Heart right ventricle (tissue), 16 donors: ENCODE measurements at regions of chr11 and their contacts with region 1.

Region 1: GRCh38 chr11:10735481-10736475 is 15.3 kb upstream of the CTR9 start:
- DNase-seq: peak; percentile 94 to 96
- ATAC-seq: peak; percentile 99 to 100 (median 100)
- H3K4me3 ChIP-seq: peak overlapping the region in 6 of 10 donors; percentile 19 to 37 (median 30)
- H3K27ac ChIP-seq: peak overlapping the region in 9 of 10 donors; percentile 50 to 76 (median 66)
- H3K4me1 ChIP-seq: peaks cover 0 to 13% (median 4%) of the 10 kb centered on the region in 9 donors
- H3K27me3 ChIP-seq: no peaks in the 10 kb centered on the region
- CTCF ChIP-seq: peak; percentile 98 to 100 (median 99)

Region 2: GRCh38 chr11:9757809-9758636 is 977.8 kb before region 1 on chr11:
- intact Hi-C with region 1: loop called in 1 of 10 experiments (anchors 10 kb)
- DNase-seq: peak; percentile 89 to 92
- ATAC-seq: peak; percentile 52 to 89 (median 75)
- H3K4me3 ChIP-seq: peak overlapping the region; percentile 50 to 86 (median 74)
- H3K27ac ChIP-seq: peak overlapping the region; percentile 57 to 97 (median 94)
- H3K4me1 ChIP-seq: peaks cover 14 to 76% (median 53%) of the 10 kb centered on the region in 9 donors
- H3K27me3 ChIP-seq: no peaks in the 10 kb centered on the region
- CTCF ChIP-seq: peak; percentile 69 to 96 (median 91)

Region 3: GRCh38 chr11:10413268-10413667 is 322.5 kb before region 1 on chr11:
- intact Hi-C with region 1: loop called in 2 of 10 experiments (anchors 5 kb)
- DNase-seq: peak in 1 of 2 donors; percentile 36
- ATAC-seq: peak in 5 of 8 donors; percentile 38 to 61 (median 58)
- H3K4me3 ChIP-seq: no peak overlapping the region
- H3K27ac ChIP-seq: peak overlapping the region in 1 of 10 donors; percentile 77
- H3K4me1 ChIP-seq: peaks cover 0 to 27% (median 4%) of the 10 kb centered on the region in 9 donors
- H3K27me3 ChIP-seq: no peaks in the 10 kb centered on the region
- CTCF ChIP-seq: peak in 6 of 9 donors; percentile 10 to 48 (median 25)

Region 4: DNA sequence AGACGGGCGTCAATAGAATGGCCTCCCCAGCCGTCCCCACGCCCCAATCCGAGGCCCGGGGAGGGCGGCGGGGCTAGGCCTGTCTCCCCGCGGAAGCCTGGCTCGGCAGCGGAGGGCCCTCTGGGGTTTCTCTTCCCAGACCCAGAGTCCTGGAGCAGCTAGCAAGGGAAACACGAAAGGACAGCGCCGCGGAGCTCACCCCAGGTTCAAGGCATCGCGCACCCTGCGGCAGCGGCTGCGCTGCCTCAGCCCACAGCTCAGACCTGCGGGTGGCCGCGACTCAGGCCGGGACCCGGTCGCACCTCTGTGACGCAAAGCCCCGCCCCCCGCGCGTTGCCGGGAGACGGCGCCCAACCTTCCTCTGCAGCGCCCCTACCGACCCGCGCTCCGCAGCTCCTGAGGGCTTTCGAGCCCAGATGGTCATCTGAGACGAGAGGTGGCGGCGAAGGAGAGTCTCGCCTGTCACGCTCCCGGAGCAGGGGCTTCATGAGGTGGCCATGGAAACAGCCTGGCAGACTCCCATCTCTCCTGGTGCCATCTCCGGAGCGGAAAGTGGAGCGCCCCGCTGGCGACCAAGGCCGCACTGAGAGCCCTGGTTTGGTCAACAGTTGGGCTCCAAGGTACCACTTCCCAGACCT is 194.7 kb before region 1 on chr11 and contains the start of gene RNF141:
- intact Hi-C with region 1: loop called in 2 of 10 experiments (anchors 10 kb)
- DNase-seq: peak; percentile 95 to 97
- ATAC-seq: peak; percentile 100
- H3K4me3 ChIP-seq: peak within 1 kb of the TSS; percentile 70 to 95 (median 89)
- H3K27ac ChIP-seq: peak within 1 kb of the TSS; percentile 44 to 92 (median 90)
- H3K4me1 ChIP-seq: peaks cover 0 to 22% (median 11%) of the 10 kb centered on the region in 9 donors
- H3K27me3 ChIP-seq: no peaks in the 10 kb centered on the region
- CTCF ChIP-seq: peak; percentile 55 to 94 (median 82)
- total RNA-seq, gene RNF141: 27.1 to 43.0 (median 35.7) TPM

Region 5: GRCh38 chr11:10623797-10624761 is 111.7 kb before region 1 on chr11:
- intact Hi-C with region 1: loop called in 8 of 10 experiments (anchors 1 to 10 kb)
- DNase-seq: peak in 1 of 2 donors; percentile 41
- ATAC-seq: peak in 5 of 8 donors; percentile 28 to 67 (median 38)
- H3K4me3 ChIP-seq: no peak overlapping the region
- H3K27ac ChIP-seq: peak overlapping the region in 6 of 10 donors; percentile 3 to 84 (median 42)
- H3K4me1 ChIP-seq: peaks cover 0 to 42% (median 6%) of the 10 kb centered on the region in 9 donors
- H3K27me3 ChIP-seq: no peaks in the 10 kb centered on the region
- CTCF ChIP-seq: peak in 8 of 9 donors; percentile 11 to 64 (median 46)

Region 6: GRCh38 chr11:10878408-10879214 is 142.8 kb after region 1 on chr11:
- intact Hi-C with region 1: no loop called
- DNase-seq: peak in 1 of 2 donors; percentile 31
- ATAC-seq: peak in 5 of 8 donors; percentile 35 to 61 (median 49)
- H3K4me3 ChIP-seq: no peak overlapping the region
- H3K27ac ChIP-seq: peak overlapping the region in 3 of 10 donors; percentile 3 to 46 (median 20)
- H3K4me1 ChIP-seq: peaks cover 0 to 13% (median 4%) of the 10 kb centered on the region in 9 donors
- H3K27me3 ChIP-seq: no peaks in the 10 kb centered on the region
- CTCF ChIP-seq: peak; percentile 13 to 83 (median 59)